Mammary epithelial cell (primary cell): ENCODE measurements at regions of chr10 and their contacts with region 1.

Region 1: DNA sequence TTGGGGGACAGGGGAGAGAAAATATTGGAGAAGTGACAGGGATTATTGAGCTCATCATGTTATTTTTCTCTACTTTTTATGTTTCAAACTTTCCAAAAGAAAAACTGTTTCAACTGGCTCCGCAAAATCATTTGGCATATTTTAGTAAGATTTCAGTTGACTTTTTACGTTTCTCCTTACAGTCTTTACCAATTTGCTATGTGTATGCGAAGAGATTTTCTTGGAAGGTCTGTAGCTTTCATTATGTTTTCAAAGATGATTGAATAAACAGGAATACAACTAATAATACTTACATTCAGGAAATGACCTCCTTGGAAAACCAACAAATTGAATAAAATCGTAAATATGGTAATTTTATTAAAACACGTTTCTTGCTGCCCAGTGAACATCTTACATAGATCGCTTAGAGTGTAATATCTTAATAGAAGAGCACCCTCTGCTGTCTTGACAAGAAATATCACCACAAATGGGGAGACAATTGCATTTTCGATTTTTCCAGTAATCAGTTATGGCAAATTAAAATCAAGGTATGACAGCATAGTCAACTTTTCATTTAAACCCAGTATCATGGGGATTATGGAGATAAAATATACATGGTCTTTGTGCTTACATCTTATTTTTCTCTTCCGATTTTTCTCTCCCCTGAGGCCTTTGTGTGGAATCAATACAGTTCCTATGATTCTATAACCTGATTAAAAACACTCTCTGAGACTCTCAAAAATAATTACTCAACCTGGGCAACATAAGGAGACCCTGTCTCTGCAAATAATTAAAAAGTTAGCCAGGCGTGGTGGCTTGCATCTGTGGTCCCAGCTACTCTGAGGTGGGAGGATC is 43.1 kb downstream of the MBL2 start:
- DNase-seq: peak; percentile 18
- H3K4me3 ChIP-seq: no peak overlapping the region
- H3K27ac ChIP-seq: no peak overlapping the region
- H3K4me1 ChIP-seq: no peaks in the 10 kb centered on the region
- H3K27me3 ChIP-seq: no peaks in the 10 kb centered on the region
- CTCF ChIP-seq: peak; percentile 49 to 56

Region 2: GRCh38 chr10:52308251-52309031 is 421.0 kb before region 1 on chr10:
- CTCF ChIA-PET with region 1: no interaction called
- dilution Hi-C with region 1: no loop called
- in situ Hi-C with region 1: no loop called
- intact Hi-C with region 1: loop called (anchors 1 kb)
- DNase-seq: peak; percentile 45
- H3K4me3 ChIP-seq: peak overlapping the region; percentile 42 to 50 (median 45)
- H3K27ac ChIP-seq: peak overlapping the region; percentile 40
- H3K4me1 ChIP-seq: peaks cover 17% of the 10 kb centered on the region
- H3K27me3 ChIP-seq: no peaks in the 10 kb centered on the region
- CTCF ChIP-seq: peak; percentile 46 to 72

Region 3: GRCh38 chr10:52322936-52323335 is 406.6 kb before region 1 on chr10:
- CTCF ChIA-PET with region 1: interaction called, 10 read pairs
- dilution Hi-C with region 1: no loop called
- in situ Hi-C with region 1: no loop called
- intact Hi-C with region 1: no loop called
- DNase-seq: no peak
- H3K4me3 ChIP-seq: no peak overlapping the region
- H3K27ac ChIP-seq: no peak overlapping the region
- H3K4me1 ChIP-seq: peaks cover 24% of the 10 kb centered on the region
- H3K27me3 ChIP-seq: no peaks in the 10 kb centered on the region
- CTCF ChIP-seq: no peak